A673 (cell line): ENCODE measurements at regions of chr2 and their contacts with region 1.

Region 1: DNA sequence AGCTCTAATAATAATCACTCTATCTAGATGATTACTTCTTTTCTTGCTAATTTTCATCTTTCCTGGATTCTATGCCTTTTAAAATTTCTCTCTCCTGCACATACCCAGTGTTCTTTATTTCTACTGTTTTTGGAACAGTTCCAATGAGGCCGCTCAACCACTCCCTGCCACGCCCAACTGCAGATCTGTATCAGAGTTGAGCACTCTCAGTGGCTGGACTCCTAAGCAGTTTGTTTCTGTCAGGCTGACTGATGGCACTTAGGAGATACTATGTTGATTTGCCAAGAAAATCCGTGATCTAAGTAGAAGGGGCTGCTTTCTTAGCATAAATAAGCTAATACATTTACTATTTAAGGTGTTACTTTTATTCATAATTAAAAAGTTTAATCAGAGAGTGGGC is 192.8 kb downstream of the ARHGAP15 start:
- DNase-seq: no peak
- H3K4me3 ChIP-seq: no peak overlapping the region
- H3K27ac ChIP-seq: no peak overlapping the region
- H3K4me1 ChIP-seq: no peaks in the 10 kb centered on the region
- H3K27me3 ChIP-seq: no peaks in the 10 kb centered on the region
- CTCF ChIP-seq: no peak

Region 2: DNA sequence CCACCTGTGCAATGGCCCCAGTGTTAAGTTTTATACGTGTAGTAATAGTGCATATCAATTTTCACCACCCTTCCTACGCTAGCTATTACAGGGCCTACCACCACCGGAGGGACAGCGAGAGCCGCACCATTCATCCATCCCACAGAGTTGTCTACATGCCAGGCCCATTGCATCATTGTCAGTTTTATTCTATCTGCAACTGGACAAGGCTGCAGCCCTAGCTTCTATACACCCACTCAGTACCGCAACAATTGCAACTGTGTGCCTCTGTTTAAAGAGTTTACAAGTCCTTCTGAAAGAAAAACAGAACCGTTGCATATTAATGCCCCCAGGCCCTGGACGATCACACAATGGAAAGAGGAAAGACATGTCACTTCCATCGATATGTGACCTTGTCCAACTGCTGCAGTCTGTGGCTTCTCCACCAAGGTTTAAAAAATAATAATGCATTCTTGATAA is 1139.3 kb after region 1 on chr2:
- CTCF ChIA-PET with region 1: no interaction called
- POLR2A ChIA-PET with region 1: interaction called, 15 read pairs
- intact Hi-C with region 1: no loop called
- DNase-seq: peak; percentile 86
- H3K4me3 ChIP-seq: peak overlapping the region; percentile 19
- H3K27ac ChIP-seq: peak overlapping the region; percentile 71
- H3K4me1 ChIP-seq: peaks cover 72% of the 10 kb centered on the region
- H3K27me3 ChIP-seq: no peaks in the 10 kb centered on the region
- CTCF ChIP-seq: no peak